ENCODE measurements at regions of chr7 and their contacts with region 1.

Region 1: DNA sequence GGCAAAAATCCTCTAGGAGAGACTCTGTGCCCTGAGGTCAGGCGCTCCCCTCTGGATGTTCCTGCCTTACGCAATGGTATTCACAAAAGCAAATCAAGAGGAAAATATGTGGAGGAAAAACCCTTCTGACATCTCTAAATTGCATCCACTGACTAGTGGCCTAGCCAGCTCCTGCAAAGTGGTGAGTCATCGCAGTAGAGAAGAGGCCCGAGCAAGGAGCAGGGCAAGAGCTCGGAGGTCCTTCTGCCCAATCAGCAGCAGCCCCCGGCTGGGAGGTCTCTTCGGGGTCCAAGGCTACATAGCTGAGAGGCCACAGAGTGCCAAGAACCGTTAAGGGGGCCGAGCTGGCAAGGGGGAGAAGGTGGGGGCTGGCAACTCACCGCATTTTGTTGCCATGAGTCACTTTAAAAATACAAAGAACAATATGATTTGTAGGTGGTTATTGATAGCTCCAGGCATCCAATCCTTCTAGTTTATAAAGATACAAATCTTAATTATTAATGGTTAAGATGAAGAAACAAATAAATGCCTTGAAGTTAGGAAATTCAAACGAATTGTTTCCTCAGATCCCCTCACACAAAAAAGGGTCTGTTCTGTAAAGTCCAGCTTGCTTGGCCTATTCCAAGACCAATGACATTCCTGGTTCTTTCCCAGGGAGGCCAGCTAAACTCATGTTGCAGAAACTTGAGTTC is 161.6 kb downstream of the PKD1L1 start:
- DNase-seq: peak; percentile 99
- H3K4me3 Mint-ChIP-seq: peak overlapping the region; percentile 46
- H3K27ac Mint-ChIP-seq: peak overlapping the region; percentile 97
- H3K4me1 Mint-ChIP-seq: peaks cover 47% of the 10 kb centered on the region
- H3K27me3 Mint-ChIP-seq: no peaks in the 10 kb centered on the region
- CTCF ChIP-seq: no peak

Region 2: DNA sequence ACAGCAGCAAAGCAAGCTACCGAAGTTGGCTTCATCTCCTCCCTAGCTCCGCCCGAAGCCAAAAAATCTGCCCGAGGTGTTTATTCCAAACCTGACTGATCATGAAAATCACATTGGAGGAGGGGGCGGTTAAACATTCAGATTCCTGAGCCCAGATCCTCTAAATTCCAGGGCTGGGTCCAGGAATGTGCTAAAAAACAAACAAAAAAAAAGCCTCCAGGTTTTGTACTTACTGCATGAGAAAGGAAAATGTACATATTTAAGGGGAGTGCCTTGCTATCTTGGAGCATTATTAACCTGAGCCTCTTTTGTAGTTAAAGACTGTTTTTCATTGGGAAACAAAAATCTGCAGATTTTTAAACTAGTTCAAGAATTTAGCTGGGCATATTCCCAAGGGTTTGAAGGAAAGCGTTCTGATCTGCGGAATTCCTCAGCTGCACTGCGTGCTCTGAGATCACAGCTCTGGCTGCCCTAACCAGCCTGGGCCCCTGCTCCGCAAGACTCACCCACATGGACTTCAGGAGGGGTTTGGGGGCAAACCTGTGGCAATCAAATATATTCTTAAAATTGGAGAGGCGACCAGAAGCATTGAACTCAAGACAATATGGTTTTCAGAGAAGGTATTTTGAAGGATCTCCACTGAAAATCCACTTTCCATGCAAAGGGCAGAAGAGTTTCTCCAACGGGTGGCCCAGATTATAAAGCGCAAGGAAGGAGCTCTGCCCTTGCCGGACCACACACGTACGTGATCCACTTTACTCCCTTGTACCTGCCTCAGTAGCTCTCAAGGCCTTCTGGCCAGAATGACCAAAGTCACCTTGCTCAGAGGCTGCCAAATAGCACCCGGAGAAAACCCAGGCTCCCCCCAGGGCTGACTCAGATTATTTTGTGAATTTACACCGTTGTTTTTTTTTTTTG is 194.8 kb before region 1 on chr7:
- CTCF ChIA-PET with region 1: interaction called, 6 read pairs
- POLR2A ChIA-PET with region 1: interaction called, 10 read pairs
- intact Hi-C with region 1: no loop called
- DNase-seq: no peak
- H3K4me3 Mint-ChIP-seq: no peak overlapping the region
- H3K27ac Mint-ChIP-seq: peak overlapping the region; percentile 78
- H3K4me1 Mint-ChIP-seq: peaks cover 35% of the 10 kb centered on the region
- H3K27me3 Mint-ChIP-seq: no peaks in the 10 kb centered on the region
- CTCF ChIP-seq: no peak

Region 3: GRCh38 chr7:47669061-47669891 is 117.4 kb before region 1 on chr7:
- CTCF ChIA-PET with region 1: interaction called, 3 read pairs
- POLR2A ChIA-PET with region 1: interaction called, 30 read pairs
- intact Hi-C with region 1: loop called (anchors 2 kb)
- DNase-seq: peak; percentile 95
- H3K4me3 Mint-ChIP-seq: no peak overlapping the region
- H3K27ac Mint-ChIP-seq: peak overlapping the region; percentile 93
- H3K4me1 Mint-ChIP-seq: peaks cover 29% of the 10 kb centered on the region
- H3K27me3 Mint-ChIP-seq: no peaks in the 10 kb centered on the region
- CTCF ChIP-seq: no peak

Region 4: GRCh38 chr7:47677667-47678111 is 109.0 kb before region 1 on chr7:
- CTCF ChIA-PET with region 1: no interaction called
- POLR2A ChIA-PET with region 1: interaction called, 30 read pairs
- intact Hi-C with region 1: no loop called
- DNase-seq: peak; percentile 30
- H3K4me3 Mint-ChIP-seq: no peak overlapping the region
- H3K27ac Mint-ChIP-seq: peak overlapping the region; percentile 78
- H3K4me1 Mint-ChIP-seq: peaks cover 30% of the 10 kb centered on the region
- H3K27me3 Mint-ChIP-seq: no peaks in the 10 kb centered on the region
- CTCF ChIP-seq: no peak

Region 5: GRCh38 chr7:47757921-47758411 is 28.7 kb before region 1 on chr7:
- CTCF ChIA-PET with region 1: interaction called, 14 read pairs
- POLR2A ChIA-PET with region 1: interaction called, 85 read pairs
- intact Hi-C with region 1: loop called (anchors 2 kb)
- DNase-seq: peak; percentile 82
- H3K4me3 Mint-ChIP-seq: peak overlapping the region; percentile 2
- H3K27ac Mint-ChIP-seq: peak overlapping the region; percentile 100
- H3K4me1 Mint-ChIP-seq: peaks cover 39% of the 10 kb centered on the region
- H3K27me3 Mint-ChIP-seq: no peaks in the 10 kb centered on the region
- CTCF ChIP-seq: no peak

Region 6: DNA sequence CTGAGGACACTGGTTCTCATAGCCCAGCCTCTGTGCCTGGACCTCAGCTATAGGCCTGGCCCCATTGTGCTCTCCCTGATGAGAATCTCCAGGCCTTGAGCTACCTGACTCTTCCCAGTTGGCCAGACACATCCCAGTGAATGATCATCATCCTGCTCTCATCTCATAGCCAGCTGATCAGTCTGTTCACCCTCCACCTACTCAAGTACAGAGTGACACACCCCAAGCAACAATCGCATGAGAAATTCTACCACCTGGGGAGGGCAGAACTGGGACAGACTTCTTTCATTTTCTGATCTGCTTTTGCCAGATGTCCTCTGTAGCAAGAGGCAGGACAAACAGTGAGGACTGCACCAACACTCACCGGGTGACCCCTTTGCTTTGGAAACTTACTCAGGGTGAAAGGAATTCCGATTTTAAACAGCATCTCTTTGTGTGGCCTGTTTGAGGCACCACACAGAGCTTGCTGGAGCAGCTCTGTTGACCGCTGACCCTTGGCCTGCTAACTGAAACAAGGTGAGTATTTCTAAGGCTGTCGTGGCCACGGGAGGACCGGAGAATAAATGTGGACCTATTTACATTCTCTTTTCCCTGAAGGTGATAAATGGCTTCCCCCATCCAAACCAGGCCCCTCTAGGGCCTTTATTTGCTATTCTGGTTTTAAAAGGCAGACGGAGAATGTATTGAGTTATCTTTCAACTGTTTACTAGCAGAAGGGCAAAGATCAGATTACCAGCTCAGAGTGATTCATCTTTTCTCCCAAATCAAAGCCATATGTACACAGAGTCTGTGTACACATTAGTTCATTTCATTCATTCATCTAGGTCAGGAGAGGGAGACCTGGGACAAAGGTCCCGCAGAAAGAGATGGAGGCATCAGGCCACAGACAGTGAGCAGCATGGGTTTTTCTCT is 23.4 kb before region 1 on chr7:
- CTCF ChIA-PET with region 1: interaction called, 14 read pairs
- POLR2A ChIA-PET with region 1: interaction called, 85 read pairs
- intact Hi-C with region 1: loop called (anchors 2 kb)
- DNase-seq: peak; percentile 58
- H3K4me3 Mint-ChIP-seq: peak overlapping the region; percentile 44
- H3K27ac Mint-ChIP-seq: peak overlapping the region; percentile 93
- H3K4me1 Mint-ChIP-seq: peaks cover 34% of the 10 kb centered on the region
- H3K27me3 Mint-ChIP-seq: no peaks in the 10 kb centered on the region
- CTCF ChIP-seq: no peak

Region 7: DNA sequence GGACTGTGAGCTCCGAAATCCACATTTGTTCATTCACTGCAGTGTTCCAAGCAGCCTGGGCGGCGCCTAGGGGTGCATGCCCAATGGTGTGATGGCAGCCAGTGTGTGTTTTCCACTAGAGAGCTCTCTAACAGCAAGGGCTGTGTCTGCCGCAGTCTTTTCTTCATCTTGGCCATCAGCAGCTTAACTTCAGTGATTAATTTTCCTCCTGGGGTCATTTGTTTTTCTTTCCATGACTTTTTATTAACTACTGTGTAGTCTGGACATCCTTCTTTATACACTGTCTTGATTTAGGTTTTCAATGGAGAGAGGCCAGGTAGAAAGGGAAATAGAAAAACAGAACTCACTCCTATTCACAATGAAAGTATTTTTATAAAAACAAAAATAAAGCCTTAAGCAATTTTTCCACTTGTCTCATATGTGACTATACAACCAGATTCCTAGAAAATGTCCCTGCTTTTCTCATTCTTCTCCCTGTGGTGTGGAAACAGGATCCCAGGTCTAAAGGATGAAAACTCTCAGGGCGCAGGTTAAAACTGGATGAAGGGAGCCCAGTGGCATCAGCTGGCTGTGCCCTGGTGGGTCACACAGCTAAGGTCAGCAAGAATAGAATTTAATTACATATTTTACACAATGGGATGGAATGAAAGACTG is 15.2 kb before region 1 on chr7:
- CTCF ChIA-PET with region 1: interaction called, 5 read pairs
- POLR2A ChIA-PET with region 1: interaction called, 85 read pairs
- intact Hi-C with region 1: no loop called
- DNase-seq: peak; percentile 47
- H3K4me3 Mint-ChIP-seq: no peak overlapping the region
- H3K27ac Mint-ChIP-seq: peak overlapping the region; percentile 74
- H3K4me1 Mint-ChIP-seq: peaks cover 9% of the 10 kb centered on the region
- H3K27me3 Mint-ChIP-seq: no peaks in the 10 kb centered on the region
- CTCF ChIP-seq: no peak

Measured in MCF 10A (cell line).